ENCODE measurements at regions of chr4 and their contacts with region 1.

Region 1: GRCh38 chr4:94304365-94304971 is 38.2 kb downstream of the HPGDS start:
- DNase-seq: peak in 1 of 2 experiments; percentile 6
- H3K4me3 ChIP-seq: no peak overlapping the region
- H3K27ac ChIP-seq: no peak overlapping the region
- H3K4me1 ChIP-seq: no peaks in the 10 kb centered on the region
- H3K27me3 ChIP-seq: no peaks in the 10 kb centered on the region
- CTCF ChIP-seq: peak; percentile 71

Region 2: DNA sequence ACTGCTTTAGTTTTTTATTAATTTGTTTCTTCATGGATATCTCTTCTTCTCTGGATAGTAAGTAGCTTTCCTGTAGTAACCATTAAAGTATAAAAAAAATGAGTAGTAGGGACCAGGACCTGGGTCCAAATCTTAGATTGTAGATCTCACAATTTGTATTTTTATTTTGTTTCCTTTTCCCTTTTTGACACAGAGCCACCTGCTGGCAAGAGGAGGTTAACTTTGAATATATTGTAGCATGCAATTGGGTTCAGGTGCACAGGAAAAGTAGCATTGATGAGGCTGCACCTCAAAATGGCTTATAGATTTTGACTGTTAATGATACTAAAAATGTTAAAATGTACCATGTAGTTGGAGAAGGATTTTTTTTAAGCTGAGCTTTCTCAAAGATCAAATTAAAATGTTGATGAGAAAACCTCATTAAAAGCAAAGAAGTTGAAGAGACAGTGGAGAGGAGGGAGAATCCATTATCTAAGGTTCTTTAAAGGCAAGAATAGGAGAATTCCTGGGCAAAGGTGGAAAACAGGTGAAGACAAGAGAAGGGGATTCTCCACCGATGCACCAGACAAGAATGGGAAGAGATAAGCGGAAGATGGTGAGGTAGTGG is 86.4 kb after region 1 on chr4:
- CTCF ChIA-PET with region 1: no interaction called
- POLR2A ChIA-PET with region 1: no interaction called
- intact Hi-C with region 1: loop called (anchors 2 kb)
- DNase-seq: no peak
- H3K4me3 ChIP-seq: no peak overlapping the region
- H3K27ac ChIP-seq: no peak overlapping the region
- H3K4me1 ChIP-seq: no peaks in the 10 kb centered on the region
- H3K27me3 ChIP-seq: no peaks in the 10 kb centered on the region
- CTCF ChIP-seq: peak; percentile 61; the same call in 1 of the 2 replicates

Region 3: GRCh38 chr4:94595879-94596483 is 291.5 kb after region 1 on chr4:
- CTCF ChIA-PET with region 1: no interaction called
- POLR2A ChIA-PET with region 1: no interaction called
- intact Hi-C with region 1: loop called (anchors 5 kb)
- DNase-seq: peak in 1 of 2 experiments; percentile 53
- H3K4me3 ChIP-seq: no peak overlapping the region
- H3K27ac ChIP-seq: no peak overlapping the region
- H3K4me1 ChIP-seq: no peaks in the 10 kb centered on the region; the same call in 1 of the 2 replicates
- H3K27me3 ChIP-seq: no peaks in the 10 kb centered on the region
- CTCF ChIP-seq: peak; percentile 77

Region 4: DNA sequence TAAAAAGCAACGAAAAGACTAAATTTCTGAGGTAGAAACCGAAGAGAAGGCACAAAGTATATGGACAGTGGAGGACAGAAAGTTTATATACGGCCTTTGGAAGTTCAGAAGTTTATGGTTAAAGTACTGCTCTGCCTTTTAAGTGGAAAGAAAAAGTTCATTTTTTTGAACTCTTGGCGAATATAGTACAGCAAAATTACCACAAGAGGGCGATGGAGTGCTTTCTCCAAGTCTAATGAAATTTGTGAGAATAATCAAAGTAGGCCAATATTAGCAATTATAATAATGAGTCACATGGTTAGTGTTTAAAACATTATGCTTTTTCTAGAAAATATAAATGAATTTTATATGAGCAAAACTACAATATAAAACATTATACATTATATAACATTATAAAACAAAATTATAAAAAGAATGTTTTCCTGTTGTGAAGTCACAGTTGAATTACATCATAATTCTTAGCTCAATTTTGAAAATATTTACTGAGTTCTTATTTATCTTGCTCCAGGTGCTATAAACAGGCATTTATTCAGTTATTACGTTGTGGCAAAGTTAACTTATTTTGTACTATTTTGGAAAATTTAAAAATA is 317.1 kb after region 1 on chr4:
- CTCF ChIA-PET with region 1: no interaction called
- POLR2A ChIA-PET with region 1: no interaction called
- intact Hi-C with region 1: loop called (anchors 5 kb)
- DNase-seq: peak in 1 of 2 experiments; percentile 40
- H3K4me3 ChIP-seq: no peak overlapping the region
- H3K27ac ChIP-seq: no peak overlapping the region
- H3K4me1 ChIP-seq: no peaks in the 10 kb centered on the region
- H3K27me3 ChIP-seq: no peaks in the 10 kb centered on the region
- CTCF ChIP-seq: peak; percentile 76

Region 5: DNA sequence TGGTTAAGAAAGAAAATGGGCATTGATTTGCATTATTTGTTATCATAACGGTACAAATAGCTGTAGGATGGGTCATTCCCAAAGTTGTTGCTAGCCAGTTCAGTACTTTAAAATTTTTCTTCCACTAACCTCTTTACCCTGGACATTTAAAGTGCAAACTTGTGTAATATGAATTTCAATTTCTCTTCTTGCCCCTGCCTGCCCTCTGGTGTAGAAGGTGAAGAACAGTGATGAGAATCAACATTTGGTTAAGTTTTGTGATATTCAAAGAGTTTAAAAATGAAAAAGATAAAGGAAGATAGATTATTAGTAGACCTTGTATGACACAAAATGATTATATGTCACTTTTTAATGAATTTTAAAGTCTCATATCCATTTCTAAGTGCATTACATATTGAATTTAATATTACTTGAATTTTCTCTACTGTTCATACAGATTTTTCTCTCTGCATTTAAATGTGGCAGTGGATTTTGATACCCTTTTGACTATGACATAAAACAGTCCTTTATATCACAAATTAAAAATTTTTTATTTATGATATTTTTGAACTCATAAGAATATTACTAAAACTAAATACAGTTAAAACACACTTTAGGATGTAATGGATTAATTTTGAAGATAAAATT is 791.0 kb after region 1 on chr4:
- CTCF ChIA-PET with region 1: no interaction called
- POLR2A ChIA-PET with region 1: no interaction called
- intact Hi-C with region 1: loop called (anchors 10 kb)
- DNase-seq: peak in 1 of 2 experiments; percentile 9
- H3K4me3 ChIP-seq: no peak overlapping the region
- H3K27ac ChIP-seq: no peak overlapping the region
- H3K4me1 ChIP-seq: no peaks in the 10 kb centered on the region
- H3K27me3 ChIP-seq: no peaks in the 10 kb centered on the region
- CTCF ChIP-seq: peak; percentile 70

Region 6: DNA sequence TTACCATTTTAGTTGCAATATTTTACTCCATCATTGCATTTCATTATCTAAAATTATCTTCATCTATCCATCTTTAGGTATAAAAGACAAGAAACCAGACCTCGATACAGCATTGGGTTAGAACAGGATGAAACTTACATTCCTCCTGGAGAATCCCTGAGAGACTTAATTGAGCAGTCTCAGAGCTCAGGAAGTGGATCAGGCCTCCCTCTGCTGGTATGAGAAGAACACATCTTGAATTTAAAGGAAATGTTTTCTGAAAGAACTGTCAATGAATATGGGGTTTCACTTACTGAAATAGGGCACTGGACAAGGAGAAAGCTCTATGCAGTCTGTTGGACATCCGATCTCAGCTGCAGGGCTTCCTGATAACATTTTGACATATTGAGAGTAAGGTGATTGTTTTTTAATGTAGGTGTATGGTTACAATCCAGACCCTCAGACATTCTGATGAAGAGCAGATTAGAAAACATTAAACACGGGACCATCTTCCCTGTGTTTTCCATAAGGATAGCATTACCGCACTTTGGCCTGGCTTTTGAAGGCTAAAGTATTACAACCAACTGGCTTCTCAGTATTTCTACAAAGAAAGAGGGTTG is 820.5 kb after region 1 on chr4:
- CTCF ChIA-PET with region 1: no interaction called
- POLR2A ChIA-PET with region 1: no interaction called
- intact Hi-C with region 1: loop called (anchors 5 kb)
- DNase-seq: peak in 1 of 2 experiments; percentile 8
- H3K4me3 ChIP-seq: no peak overlapping the region
- H3K27ac ChIP-seq: no peak overlapping the region
- H3K4me1 ChIP-seq: no peaks in the 10 kb centered on the region
- H3K27me3 ChIP-seq: no peaks in the 10 kb centered on the region
- CTCF ChIP-seq: peak; percentile 63

Measured in PC-9 (cell line).